GM13977 (cell line): ENCODE measurements at regions of chr12 and their contacts with region 1.

Region 1: DNA sequence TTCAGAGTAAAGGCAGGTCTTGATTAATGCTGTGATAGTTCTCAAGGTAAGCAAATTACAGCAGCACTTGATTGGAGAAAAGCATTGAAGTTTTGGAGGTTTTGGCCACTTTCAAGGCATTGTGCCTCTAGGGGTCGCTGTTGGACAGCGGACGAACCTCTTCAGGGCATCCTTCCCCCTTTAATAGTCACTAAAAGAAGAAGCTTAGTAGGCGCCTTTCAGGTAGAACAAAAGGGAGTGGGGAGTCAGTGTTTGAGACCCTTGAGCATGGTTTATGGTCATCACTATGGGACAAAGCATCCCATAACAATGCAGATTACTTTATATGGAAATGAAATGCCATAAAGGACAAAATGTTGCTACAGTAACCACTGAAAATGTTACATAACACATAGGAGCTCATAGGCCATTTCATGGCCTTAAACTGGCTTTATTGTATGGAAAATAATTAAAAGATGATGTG is 199.5 kb upstream of the DCN start:
- DNase-seq: peak; percentile 21
- CTCF ChIP-seq: peak; percentile 84

Region 2: DNA sequence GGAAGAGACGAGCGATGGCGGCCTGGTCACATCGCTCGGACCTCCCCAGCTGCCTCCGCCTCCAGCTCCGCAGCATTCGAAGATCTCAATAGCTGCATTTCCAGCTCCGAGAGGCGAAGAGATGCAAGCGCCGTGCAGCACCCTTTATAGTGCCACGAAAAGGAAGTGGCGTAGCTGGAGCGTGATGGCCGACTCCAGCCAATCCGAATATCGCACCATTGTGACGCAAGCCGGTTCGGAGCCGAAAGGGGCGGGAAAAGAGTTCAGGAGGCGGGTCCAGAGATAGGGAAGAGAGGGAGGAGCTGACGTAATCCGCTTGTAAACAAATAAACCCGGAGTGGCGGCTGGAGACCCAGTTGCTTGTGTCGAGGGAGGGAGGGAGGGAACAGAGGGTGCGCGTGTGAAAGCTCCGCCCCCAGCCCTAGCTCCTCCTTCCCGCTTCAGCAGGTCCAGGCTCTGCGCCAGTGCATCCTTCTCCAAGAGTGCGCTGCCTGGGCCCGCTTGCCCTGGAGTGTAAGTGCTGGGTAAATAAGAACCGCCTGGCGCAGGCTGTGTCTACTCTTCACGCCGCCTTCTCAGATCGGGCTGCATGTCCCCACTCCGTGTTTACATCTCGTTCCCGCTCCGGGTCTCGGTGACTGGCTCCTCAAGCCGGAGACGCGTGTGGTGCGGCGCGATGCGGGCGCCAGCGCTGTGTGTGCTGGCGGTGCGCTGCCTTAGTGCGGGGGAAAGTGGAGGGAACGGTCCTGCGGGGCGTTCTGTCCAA is 763.8 kb after region 1 on chr12 and contains the start of gene BTG1:
- in situ Hi-C with region 1: loop called (anchors 25 kb)
- DNase-seq: peak; percentile 98
- CTCF ChIP-seq: no peak

Region 3: GRCh38 chr12:92408072-92408900 is 1026.2 kb after region 1 on chr12:
- in situ Hi-C with region 1: loop called (anchors 25 kb)
- DNase-seq: peak; percentile 41
- CTCF ChIP-seq: peak; percentile 67